ENCODE measurements at regions of chr4 and their contacts with region 1.

Region 1: GRCh38 chr4:103008875-103009729 is 10.4 kb downstream of the SLC9B1 start:
- DNase-seq: peak; percentile 52
- H3K27ac ChIP-seq: no peak overlapping the region
- CTCF ChIP-seq: peak; percentile 80

Region 2: DNA sequence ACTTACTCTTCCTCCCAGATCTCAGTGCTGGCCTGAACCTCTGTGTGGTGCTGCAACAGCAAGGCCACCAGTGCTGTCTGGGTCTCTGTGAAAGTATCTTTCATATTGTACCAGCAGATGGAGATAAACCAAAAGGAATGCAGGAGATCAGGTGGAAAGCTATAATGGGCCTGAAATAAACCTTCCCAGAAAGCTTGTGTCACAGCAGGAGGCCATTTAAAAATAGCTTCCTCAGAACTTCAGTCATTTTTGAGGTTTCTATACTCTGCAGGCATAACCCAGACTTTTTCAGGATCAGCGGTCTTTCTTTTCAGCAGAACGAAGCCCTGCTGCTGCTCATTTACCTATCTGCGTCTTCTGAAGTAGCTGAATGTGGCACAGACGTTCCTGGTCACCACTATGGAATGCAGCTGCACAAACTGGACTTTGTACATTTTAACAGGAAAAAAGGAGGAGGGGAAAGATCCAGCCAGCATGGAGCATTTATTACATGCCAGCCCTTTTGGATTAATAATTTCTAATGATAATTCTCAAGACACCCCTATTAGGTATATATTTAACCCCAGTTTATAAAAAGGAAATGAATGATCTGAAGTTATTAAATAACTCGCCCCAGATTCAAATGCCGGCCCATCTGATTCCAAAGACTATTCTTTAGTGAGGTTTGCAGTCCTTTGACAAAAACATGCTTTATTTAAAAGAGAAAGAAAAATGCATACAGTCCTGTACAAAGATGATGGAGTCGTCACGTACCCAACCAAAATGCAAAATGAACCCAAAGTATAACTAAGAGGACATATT is 388.2 kb before region 1 on chr4:
- CTCF ChIA-PET with region 1: interaction called, 21 read pairs
- POLR2A ChIA-PET with region 1: no interaction called
- DNase-seq: peak; percentile 69
- H3K27ac ChIP-seq: no peak overlapping the region
- CTCF ChIP-seq: peak; percentile 64

Region 3: DNA sequence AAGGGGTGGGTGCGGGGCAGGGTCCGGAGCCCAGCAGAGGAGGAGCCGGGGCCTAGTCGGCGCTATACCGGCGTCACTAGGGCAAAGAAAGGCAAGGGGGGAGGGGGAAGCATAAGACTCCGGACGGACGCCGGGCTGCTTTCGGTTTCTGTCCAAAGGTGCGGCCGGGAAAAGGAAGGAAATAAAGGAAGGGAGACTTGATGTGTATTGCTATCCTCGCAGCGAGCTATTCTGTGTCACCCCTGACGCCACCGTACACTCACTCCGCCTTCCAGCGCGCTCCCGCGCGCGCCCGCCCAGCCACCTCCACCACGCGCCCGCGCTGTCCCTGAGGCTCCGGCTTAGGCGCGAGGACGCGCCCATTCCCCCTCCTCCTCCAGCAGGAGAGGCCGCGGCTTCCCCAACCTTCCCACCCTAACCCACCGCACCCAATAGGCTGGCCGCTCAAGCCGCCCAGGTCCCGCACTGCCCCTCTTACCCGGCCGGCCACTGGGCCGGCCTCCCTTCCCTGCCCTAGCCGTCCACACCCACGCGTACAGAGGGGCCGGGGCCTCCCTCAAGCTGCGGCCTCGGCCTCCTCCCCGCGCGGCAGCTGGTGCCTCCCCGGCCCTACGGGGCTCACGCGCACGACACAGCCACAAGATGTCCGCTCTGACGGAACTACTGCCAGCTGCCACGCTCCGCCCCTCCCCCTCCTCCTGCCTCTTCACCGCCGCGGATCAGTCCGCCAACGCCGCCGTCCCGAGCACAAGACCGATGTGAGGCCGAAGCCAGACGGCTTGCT is 182.0 kb before region 1 on chr4 and contains the start of gene UBE2D3:
- CTCF ChIA-PET with region 1: no interaction called
- POLR2A ChIA-PET with region 1: no interaction called
- DNase-seq: peak; percentile 59
- H3K27ac ChIP-seq: peak within 1 kb of the TSS; percentile 99
- CTCF ChIP-seq: no peak